ENCODE measurements at regions of chr9 and their contacts with region 1.

Region 1: GRCh38 chr9:136482793-136483588 is at the start of gene SEC16A:
- DNase-seq: peak; percentile 60
- ATAC-seq: peak; percentile 83
- H3K4me3 ChIP-seq: peak within 1 kb of the TSS; percentile 90 to 94
- H3K27ac ChIP-seq: peak within 1 kb of the TSS; percentile 86
- H3K4me1 ChIP-seq: peaks cover 8% of the 10 kb centered on the region
- H3K27me3 ChIP-seq: no peaks in the 10 kb centered on the region
- CTCF ChIP-seq: no peak
- total RNA-seq, gene SEC16A: 76.5 TPM

Region 2: GRCh38 chr9:136451221-136451877 is 31.6 kb before region 1 on chr9:
- CTCF ChIA-PET with region 1: interaction called, 4 read pairs
- POLR2A ChIA-PET with region 1: interaction called, 18 read pairs
- in situ Hi-C with region 1: no loop called
- intact Hi-C with region 1: no loop called
- DNase-seq: no peak
- ATAC-seq: no peak
- H3K4me3 ChIP-seq: no peak overlapping the region
- H3K27ac ChIP-seq: no peak overlapping the region
- H3K4me1 ChIP-seq: no peaks in the 10 kb centered on the region
- H3K27me3 ChIP-seq: no peaks in the 10 kb centered on the region
- CTCF ChIP-seq: no peak

Region 3: DNA sequence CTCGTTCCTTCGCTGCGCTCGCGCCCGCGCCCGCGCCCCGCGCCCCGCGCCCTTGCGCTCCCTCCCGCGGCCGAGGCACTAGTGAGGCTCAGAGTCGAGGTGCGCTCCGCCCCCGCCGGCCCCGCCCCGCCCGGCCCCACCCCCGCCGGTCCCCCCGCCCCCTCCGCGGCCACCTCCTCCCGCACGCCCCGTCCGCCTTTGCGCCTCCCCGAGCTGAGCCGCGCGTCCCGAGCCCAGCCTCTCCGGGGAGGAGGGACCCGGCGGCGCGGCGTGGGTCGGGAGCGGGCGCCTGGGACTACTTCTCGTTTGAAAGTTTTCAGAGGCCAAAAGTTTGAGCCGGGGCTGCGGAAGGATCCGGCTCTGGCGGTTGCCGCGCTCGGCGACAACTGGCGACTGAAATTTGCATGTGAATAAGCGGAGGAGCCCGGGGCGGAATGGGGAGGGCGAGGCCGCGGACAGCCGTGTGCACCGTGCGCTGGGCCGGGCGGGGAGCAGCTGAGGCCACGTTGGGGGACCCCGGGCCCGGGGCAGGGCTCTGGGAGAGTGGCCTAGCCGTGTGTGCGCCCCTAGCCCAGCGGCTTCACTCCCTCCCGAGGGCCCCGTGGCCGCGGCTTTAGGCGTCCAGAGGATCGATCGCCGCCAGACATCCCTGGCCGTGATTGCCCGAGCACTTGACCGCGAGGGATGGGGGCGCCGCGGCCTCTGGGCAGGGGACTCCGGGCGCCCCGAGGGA is 63.1 kb after region 1 on chr9 and contains the start of gene NOTCH1:
- CTCF ChIA-PET with region 1: no interaction called
- POLR2A ChIA-PET with region 1: no interaction called
- in situ Hi-C with region 1: loop called (anchors 10 kb)
- intact Hi-C with region 1: no loop called
- DNase-seq: no peak
- ATAC-seq: peak; percentile 87
- H3K4me3 ChIP-seq: peak within 1 kb of the TSS; percentile 62 to 70
- H3K27ac ChIP-seq: peak within 1 kb of the TSS; percentile 72
- H3K4me1 ChIP-seq: peaks cover 11% of the 10 kb centered on the region
- H3K27me3 ChIP-seq: no peaks in the 10 kb centered on the region
- CTCF ChIP-seq: no peak
- total RNA-seq, gene NOTCH1: 13.4 TPM

Region 4: DNA sequence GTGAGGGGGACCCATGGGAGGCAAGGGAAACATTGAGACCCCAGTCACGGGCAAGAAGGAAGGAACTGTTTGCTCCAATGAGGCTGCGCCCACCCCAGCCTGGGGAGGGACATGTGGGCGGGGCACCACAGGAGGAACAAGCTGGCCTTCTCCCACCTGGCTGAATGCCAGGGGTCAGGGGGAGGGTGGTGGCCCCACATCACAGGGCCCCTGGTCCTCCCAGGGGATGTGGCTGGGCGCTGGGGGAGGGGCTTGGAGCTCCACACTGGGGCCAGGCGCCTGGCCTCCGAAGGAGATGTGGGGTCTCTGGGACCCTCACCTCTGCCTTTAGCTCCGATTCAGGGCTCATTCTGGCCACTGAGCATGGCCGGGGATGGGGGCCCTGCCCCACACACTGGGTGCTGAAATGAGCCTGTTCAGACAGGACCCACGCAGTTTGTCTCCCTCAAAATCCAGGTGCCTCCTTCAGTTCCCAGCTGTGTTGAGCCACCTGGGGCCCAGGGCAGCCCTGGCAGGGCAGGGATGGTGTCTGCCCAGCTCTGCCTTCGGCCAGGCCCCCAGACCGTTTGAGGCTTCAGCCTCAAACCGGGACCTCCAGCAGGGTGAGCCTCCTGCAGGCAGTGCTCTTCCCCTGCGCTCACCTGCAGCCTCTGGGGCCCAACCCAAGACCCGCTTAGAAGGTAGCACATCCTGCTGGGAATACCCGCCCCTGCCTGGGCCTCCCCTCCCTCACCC is 96.1 kb after region 1 on chr9:
- CTCF ChIA-PET with region 1: no interaction called
- POLR2A ChIA-PET with region 1: interaction called, 12 read pairs
- in situ Hi-C with region 1: no loop called
- intact Hi-C with region 1: no loop called
- DNase-seq: no peak
- ATAC-seq: peak; percentile 82
- H3K4me3 ChIP-seq: no peak overlapping the region
- H3K27ac ChIP-seq: no peak overlapping the region
- H3K4me1 ChIP-seq: peaks cover 10% of the 10 kb centered on the region
- H3K27me3 ChIP-seq: no peaks in the 10 kb centered on the region
- CTCF ChIP-seq: no peak

Region 5: GRCh38 chr9:136625101-136626060 is 142.4 kb after region 1 on chr9:
- CTCF ChIA-PET with region 1: interaction called, 18 read pairs
- POLR2A ChIA-PET with region 1: no interaction called
- in situ Hi-C with region 1: no loop called
- intact Hi-C with region 1: loop called (anchors 2 kb)
- DNase-seq: no peak
- ATAC-seq: peak; percentile 71
- H3K4me3 ChIP-seq: no peak overlapping the region
- H3K27ac ChIP-seq: no peak overlapping the region; the same call in 1 of the 2 replicates
- H3K4me1 ChIP-seq: peaks cover 16% of the 10 kb centered on the region
- H3K27me3 ChIP-seq: no peaks in the 10 kb centered on the region
- CTCF ChIP-seq: peak; percentile 75

Region 6: DNA sequence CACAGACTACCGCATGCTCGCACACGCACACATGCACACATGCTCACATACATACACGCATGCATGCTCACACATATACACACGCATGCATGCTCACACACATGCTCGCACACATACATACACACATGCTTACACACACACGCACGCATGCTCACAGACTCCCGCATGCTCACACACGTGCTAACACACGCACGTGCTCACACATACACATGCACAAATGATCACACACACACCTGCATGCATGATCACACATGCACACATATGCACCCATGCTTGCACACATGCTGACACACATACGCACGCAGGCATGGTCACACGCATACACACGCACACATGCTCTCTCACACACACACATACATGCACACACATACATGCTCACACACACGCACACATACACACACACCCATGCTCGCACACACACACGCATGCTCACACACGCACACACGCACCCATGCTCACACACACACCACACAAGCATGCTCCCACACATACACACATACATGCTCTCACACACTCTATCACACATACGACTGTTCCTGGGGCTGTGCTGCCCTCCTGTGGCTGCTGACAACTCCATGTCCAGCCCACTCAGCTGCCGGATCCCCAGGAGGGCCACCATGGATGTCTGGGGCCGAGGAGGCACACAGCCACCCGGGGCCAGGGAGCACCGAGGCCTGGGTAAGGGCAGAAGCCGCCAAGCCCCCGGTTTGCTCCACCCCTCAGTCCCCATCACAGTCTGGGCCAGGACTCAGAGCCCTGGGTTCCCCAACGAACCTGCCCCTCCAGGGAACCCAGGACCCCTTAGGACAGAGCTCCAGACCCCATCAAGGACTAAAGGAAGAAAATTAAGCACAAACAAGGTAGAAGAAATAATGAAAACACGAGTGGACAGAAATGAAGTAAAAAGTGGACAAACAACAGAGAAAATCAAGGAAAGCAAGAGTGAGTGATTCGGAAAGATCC is 148.3 kb after region 1 on chr9:
- CTCF ChIA-PET with region 1: interaction called, 18 read pairs
- POLR2A ChIA-PET with region 1: no interaction called
- in situ Hi-C with region 1: no loop called
- intact Hi-C with region 1: loop called (anchors 2 kb)
- DNase-seq: no peak
- ATAC-seq: peak; percentile 85
- H3K4me3 ChIP-seq: no peak overlapping the region
- H3K27ac ChIP-seq: no peak overlapping the region
- H3K4me1 ChIP-seq: peaks cover 2% of the 10 kb centered on the region; the same call in 1 of the 2 replicates
- H3K27me3 ChIP-seq: no peaks in the 10 kb centered on the region
- CTCF ChIP-seq: peak; percentile 85